ENCODE measurements at regions of chr4 and their contacts with region 1.

Region 1: GRCh38 chr4:11338956-11339782 is 89.5 kb downstream of the HS3ST1 start:
- DNase-seq: no peak
- H3K4me3 ChIP-seq: no peak overlapping the region
- H3K27ac ChIP-seq: no peak overlapping the region
- H3K4me1 ChIP-seq: no peaks in the 10 kb centered on the region
- H3K27me3 ChIP-seq: no peaks in the 10 kb centered on the region
- CTCF ChIP-seq: no peak

Region 2: GRCh38 chr4:11218692-11219091 is 120.5 kb before region 1 on chr4:
- CTCF ChIA-PET with region 1: no interaction called
- dilution Hi-C with region 1: loop called (anchors 10 kb)
- in situ Hi-C with region 1: no loop called
- intact Hi-C with region 1: no loop called
- DNase-seq: no peak
- H3K4me3 ChIP-seq: no peak overlapping the region
- H3K27ac ChIP-seq: no peak overlapping the region
- H3K4me1 ChIP-seq: no peaks in the 10 kb centered on the region
- H3K27me3 ChIP-seq: peaks cover 4% of the 10 kb centered on the region
- CTCF ChIP-seq: no peak

Region 3: GRCh38 chr4:11480683-11481082 is 141.5 kb after region 1 on chr4:
- CTCF ChIA-PET with region 1: no interaction called
- dilution Hi-C with region 1: no loop called
- in situ Hi-C with region 1: no loop called
- intact Hi-C with region 1: no loop called
- DNase-seq: no peak
- H3K4me3 ChIP-seq: no peak overlapping the region
- H3K27ac ChIP-seq: no peak overlapping the region
- H3K4me1 ChIP-seq: peaks cover 21% of the 10 kb centered on the region
- H3K27me3 ChIP-seq: no peaks in the 10 kb centered on the region
- CTCF ChIP-seq: no peak

Measured in mammary epithelial cell (primary cell).